ENCODE measurements at regions of chr11 and their contacts with region 1.

Region 1: DNA sequence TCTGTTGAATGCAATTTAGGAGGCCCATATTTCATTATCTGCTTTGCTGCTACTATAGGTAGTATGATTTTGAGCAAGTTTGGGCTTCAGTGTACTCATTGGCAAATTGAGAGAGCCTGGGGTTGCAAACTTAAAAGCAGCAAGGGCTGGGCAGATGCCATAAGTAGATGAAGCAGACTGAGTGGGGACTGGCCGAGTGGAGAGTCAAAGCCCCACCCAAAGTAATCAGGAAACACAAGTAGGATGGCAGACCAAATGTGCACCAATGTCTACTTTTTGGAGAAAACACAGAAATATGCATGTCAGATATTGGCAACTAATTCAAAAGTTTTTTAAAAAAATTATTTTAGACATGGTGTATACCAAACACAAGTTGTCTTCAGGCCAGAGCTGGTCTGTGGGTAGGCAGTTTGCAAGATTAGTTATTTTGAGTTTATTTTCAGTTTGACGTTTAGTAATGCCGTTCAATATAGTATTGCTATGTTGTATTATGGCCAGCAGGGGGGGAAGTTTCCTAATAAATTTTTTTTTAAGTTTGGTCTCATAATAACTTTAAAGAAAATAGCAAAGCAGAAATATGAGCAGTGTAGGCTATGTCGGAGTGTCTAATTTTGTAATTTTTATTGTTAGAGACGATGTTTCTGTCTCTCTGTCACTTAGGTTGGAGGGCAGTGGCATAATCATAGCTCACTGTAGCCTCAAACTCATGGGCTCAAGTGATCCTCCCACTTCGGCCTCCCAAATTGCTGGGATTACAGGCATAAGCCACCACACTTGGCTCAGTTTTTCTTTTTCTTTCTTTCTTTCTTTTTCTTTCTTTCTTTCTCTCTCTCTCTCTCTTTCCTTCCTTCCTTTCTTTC is 105.1 kb downstream of the HIPK3 start:
- DNase-seq: no peak
- ATAC-seq: peak; percentile 25

Region 2: DNA sequence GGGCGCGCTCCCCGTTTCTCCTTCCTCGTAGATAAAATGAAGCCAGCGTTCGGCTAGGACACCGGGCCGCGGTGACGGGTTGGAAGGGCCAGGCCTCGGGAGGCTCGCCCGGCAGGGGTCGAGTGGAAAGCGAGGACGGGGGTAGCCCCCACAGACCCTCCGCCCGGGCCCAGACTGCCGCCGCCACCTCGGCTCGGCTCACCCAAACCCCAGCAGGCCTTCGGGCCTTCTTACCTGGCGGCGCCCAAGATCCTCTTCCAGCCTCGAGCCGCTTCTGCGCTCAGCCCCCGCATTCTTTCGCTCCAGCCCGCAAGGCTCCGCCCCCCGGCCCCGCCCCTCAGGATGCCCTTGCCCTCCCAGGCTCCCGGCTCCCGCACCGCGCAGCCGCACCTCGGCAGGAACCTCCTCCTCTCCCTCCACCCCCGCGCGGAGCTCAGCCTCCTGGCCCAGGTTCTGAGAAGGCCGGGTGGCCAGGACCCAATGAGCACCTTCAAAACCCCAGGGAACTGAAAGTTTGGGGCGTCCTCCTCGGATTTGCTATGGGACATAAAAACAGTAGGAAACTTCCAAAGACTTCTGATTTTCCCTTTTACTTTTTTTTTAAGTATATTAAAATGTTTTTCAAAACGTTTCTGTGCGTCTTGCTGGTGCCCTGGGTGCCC is 374.0 kb after region 1 on chr11 and contains the start of gene CD59:
- intact Hi-C with region 1: loop called (anchors 5 kb)
- DNase-seq: peak; percentile 99
- ATAC-seq: peak; percentile 96
- total RNA-seq, gene CD59: 814 TPM